GM12878 (cell line): ENCODE measurements at regions of chrX and their contacts with region 1.

Region 1: GRCh38 chrX:21839334-21840192 is at the start of gene MBTPS2:
- DNase-seq: peak; percentile 46
- ATAC-seq: peak; percentile 90
- H3K4me3 ChIP-seq: peak within 1 kb of the TSS; percentile 57
- H3K27ac ChIP-seq: peak within 1 kb of the TSS; percentile 65
- H3K4me1 ChIP-seq: no peaks in the 10 kb centered on the region
- H3K27me3 ChIP-seq: no peaks in the 10 kb centered on the region
- CTCF ChIP-seq: peak in 2 of 3 experiments; percentile 8 to 28; a peak in 2 of 6 replicates
- EP300 ChIP-seq: no peak
- POLR2A ChIP-seq: peak; percentile 93
- RAD21 ChIP-seq: peak; percentile 45
- polyA plus RNA-seq, gene MBTPS2: 2.9 to 3.2 TPM

Region 2: DNA sequence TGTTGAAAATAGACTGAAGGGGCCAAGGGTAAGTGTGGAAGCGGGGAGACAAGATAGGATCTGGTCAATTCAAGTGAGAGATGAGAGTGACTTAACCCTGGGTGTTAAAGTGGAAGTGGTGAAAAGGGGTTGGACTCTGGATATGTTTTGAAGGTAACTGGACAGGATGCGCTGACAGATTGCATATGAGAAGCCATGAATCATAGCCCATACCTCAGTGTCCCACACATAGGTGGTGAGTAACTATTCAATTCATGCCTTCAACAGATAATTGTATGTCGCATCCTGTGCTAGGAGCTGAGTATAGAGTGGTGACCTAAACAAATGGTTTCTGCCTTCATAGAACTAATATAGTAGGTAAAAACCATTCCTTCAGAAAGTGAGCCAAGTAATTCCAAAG is 258.1 kb before region 1 on chrX:
- CTCF ChIA-PET with region 1: no interaction called
- POLR2A ChIA-PET with region 1: no interaction called
- RAD21 ChIA-PET with region 1: no interaction called
- SMC1A ChIA-PET with region 1: no interaction called
- in situ Hi-C with region 1: no loop called
- intact Hi-C with region 1: no loop called
- DNase-seq: no peak
- ATAC-seq: no peak
- H3K4me3 ChIP-seq: no peak overlapping the region
- H3K27ac ChIP-seq: no peak overlapping the region
- H3K4me1 ChIP-seq: no peaks in the 10 kb centered on the region
- H3K27me3 ChIP-seq: no peaks in the 10 kb centered on the region
- CTCF ChIP-seq: no peak
- EP300 ChIP-seq: no peak
- POLR2A ChIP-seq: no peak
- RAD21 ChIP-seq: no peak

Region 3: DNA sequence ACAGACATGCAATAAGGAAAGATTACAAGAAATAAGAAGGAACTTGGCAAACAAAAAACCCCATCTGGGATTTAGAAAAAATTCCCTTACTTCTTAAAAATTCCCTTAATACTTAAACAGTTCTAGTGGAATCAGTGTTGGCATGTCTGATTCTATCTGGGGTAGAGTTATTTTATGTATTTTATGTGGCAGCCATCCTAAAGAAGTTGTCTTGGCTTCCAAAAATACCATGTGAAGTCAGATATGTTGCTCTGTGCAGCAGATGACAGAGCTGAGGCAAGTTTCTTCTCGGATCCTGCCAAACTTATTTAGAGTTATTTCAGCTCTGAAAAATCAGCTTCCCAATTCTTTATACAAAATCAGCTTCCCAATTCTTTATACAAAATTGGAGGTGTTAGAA is 30.9 kb after region 1 on chrX:
- CTCF ChIA-PET with region 1: no interaction called
- POLR2A ChIA-PET with region 1: no interaction called
- RAD21 ChIA-PET with region 1: no interaction called
- SMC1A ChIA-PET with region 1: no interaction called
- in situ Hi-C with region 1: no loop called
- intact Hi-C with region 1: no loop called
- DNase-seq: no peak
- ATAC-seq: no peak
- H3K4me3 ChIP-seq: no peak overlapping the region
- H3K27ac ChIP-seq: no peak overlapping the region
- H3K4me1 ChIP-seq: no peaks in the 10 kb centered on the region
- H3K27me3 ChIP-seq: no peaks in the 10 kb centered on the region
- CTCF ChIP-seq: no peak
- EP300 ChIP-seq: no peak
- POLR2A ChIP-seq: no peak
- RAD21 ChIP-seq: no peak

Region 4: DNA sequence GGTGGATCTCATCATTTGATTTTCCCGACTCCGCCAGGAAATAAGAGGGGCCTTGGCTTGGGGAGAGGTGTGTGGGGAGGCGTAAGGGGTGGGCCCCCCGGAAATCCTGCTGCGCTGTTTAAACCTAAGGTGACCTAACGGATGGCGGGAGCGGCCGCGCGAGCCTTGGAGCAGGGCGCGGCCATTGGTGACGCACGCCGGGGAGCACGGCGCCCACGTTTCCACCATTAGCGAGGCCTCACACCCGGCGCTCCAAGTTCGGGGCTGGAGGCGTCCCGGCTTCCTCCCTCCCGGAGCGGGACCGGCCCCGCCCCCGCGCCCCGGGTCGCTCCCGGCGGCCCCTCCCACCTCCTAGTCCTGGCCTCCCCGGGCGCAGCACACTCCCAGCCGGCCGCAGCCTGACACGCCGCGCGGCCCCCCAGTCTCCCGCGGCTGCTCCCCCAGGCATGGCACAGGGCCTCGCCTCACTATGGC is 100.8 kb after region 1 on chrX and contains the start of gene SMS:
- CTCF ChIA-PET with region 1: interaction called, 4 read pairs
- POLR2A ChIA-PET with region 1: no interaction called
- RAD21 ChIA-PET with region 1: no interaction called
- SMC1A ChIA-PET with region 1: no interaction called
- in situ Hi-C with region 1: no loop called
- intact Hi-C with region 1: loop called (anchors 2 kb)
- DNase-seq: no peak
- ATAC-seq: peak; percentile 73
- H3K4me3 ChIP-seq: peak within 1 kb of the TSS; percentile 66
- H3K27ac ChIP-seq: peak within 1 kb of the TSS; percentile 35; the same call in 1 of the 2 replicates
- H3K4me1 ChIP-seq: no peaks in the 10 kb centered on the region
- H3K27me3 ChIP-seq: no peaks in the 10 kb centered on the region
- CTCF ChIP-seq: no peak
- EP300 ChIP-seq: no peak
- POLR2A ChIP-seq: 0 out of 2 replicates have a peak, but pooled peaks have one; percentile 73
- RAD21 ChIP-seq: no peak
- polyA plus RNA-seq, gene SMS: 55.8 to 87.2 TPM